ENCODE measurements at regions of chrX and their contacts with region 1.

Region 1: DNA sequence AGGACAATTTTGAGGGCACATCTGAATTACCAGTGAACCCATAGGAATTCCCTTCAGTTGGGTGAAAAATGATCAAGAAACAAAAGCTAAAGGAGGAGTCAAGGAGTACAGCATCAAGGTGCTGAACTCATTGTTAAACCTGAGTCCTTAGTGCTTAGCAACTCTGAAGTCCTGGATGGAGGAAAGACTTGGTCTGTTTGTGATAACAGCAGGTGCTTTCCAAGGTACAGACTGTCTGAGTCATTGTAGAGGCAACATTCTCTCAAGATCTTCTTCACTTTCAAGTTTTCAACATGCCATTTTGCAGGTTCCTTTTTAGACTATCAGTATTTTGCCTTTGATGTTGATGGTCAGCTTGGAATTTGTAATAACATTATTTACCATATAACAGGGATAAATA is 293.9 kb downstream of the AFF2 start:
- DNase-seq: no peak
- ATAC-seq: no peak
- H3K4me3 ChIP-seq: no peak overlapping the region
- H3K27ac ChIP-seq: no peak overlapping the region
- H3K4me1 ChIP-seq: no peaks in the 10 kb centered on the region
- H3K27me3 ChIP-seq: no peaks in the 10 kb centered on the region
- CTCF ChIP-seq: no peak
- EP300 ChIP-seq: no peak
- POLR2A ChIP-seq: no peak
- RAD21 ChIP-seq: no peak

Region 2: GRCh38 chrX:148741441-148741840 is 52.9 kb before region 1 on chrX:
- CTCF ChIA-PET with region 1: no interaction called
- POLR2A ChIA-PET with region 1: no interaction called
- in situ Hi-C with region 1: no loop called
- intact Hi-C with region 1: loop called (anchors 2 kb)
- DNase-seq: no peak
- ATAC-seq: no peak
- H3K4me3 ChIP-seq: no peak overlapping the region
- H3K27ac ChIP-seq: no peak overlapping the region
- H3K4me1 ChIP-seq: no peaks in the 10 kb centered on the region
- H3K27me3 ChIP-seq: no peaks in the 10 kb centered on the region
- CTCF ChIP-seq: no peak
- EP300 ChIP-seq: no peak
- POLR2A ChIP-seq: no peak
- RAD21 ChIP-seq: no peak

Region 3: DNA sequence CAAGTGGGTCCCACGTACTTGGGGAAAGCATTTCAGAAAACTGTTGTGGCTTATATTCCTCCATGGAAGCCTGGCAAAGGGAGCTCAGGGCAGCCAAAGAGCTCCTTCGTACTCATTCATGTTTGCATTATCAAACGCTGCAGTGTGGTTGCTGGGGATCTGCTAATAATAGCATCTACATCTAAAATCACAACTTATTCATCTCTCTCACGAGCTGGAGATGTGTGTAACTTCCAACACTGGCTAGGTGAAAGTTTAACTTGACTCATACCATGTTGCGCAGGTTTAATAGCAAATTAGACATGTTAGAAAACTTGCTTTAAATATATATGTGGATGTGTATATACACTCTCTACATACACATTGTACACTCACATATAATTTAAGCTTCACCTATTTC is 121.1 kb after region 1 on chrX:
- CTCF ChIA-PET with region 1: no interaction called
- POLR2A ChIA-PET with region 1: no interaction called
- in situ Hi-C with region 1: no loop called
- intact Hi-C with region 1: no loop called
- DNase-seq: no peak
- ATAC-seq: no peak
- H3K4me3 ChIP-seq: no peak overlapping the region
- H3K27ac ChIP-seq: no peak overlapping the region
- H3K4me1 ChIP-seq: no peaks in the 10 kb centered on the region
- H3K27me3 ChIP-seq: no peaks in the 10 kb centered on the region
- CTCF ChIP-seq: no peak
- EP300 ChIP-seq: no peak
- POLR2A ChIP-seq: no peak
- RAD21 ChIP-seq: no peak

Region 4: DNA sequence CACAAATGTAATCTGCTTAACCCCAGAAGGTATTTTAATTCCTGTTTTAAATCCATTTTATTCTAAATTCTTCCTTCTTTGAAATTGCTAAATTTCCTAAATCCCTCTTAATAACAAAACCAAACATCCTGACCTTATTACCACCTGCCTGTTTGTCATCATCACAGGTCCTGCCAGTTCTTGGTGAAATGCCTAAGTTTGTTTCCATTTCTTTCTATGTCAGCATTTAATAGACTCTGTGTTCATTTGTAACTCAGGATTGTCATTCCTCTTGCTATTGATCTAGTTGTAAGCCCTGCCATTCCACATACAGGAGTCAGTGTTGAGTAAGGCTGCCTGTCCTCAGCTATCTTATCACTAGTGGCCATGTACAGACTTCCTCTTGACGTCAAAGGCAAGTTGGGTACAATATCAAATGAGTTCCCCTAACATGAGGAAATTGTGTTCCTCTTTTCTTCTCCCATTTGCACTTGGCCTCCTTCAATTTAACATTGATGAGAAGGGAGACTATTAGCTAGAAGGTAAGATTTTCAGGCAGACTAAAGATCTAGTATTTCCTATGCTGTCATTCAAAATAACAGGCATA is 146.2 kb after region 1 on chrX:
- CTCF ChIA-PET with region 1: no interaction called
- POLR2A ChIA-PET with region 1: no interaction called
- in situ Hi-C with region 1: no loop called
- intact Hi-C with region 1: no loop called
- DNase-seq: no peak
- ATAC-seq: no peak
- H3K4me3 ChIP-seq: no peak overlapping the region
- H3K27ac ChIP-seq: no peak overlapping the region
- H3K4me1 ChIP-seq: no peaks in the 10 kb centered on the region
- H3K27me3 ChIP-seq: no peaks in the 10 kb centered on the region
- CTCF ChIP-seq: no peak
- EP300 ChIP-seq: no peak
- POLR2A ChIP-seq: no peak
- RAD21 ChIP-seq: no peak

Measured in K562 (cell line).